Upper lobe of right lung (tissue), 1 donor: ENCODE measurements at regions of chr10 and their contacts with region 1.

Region 1: DNA sequence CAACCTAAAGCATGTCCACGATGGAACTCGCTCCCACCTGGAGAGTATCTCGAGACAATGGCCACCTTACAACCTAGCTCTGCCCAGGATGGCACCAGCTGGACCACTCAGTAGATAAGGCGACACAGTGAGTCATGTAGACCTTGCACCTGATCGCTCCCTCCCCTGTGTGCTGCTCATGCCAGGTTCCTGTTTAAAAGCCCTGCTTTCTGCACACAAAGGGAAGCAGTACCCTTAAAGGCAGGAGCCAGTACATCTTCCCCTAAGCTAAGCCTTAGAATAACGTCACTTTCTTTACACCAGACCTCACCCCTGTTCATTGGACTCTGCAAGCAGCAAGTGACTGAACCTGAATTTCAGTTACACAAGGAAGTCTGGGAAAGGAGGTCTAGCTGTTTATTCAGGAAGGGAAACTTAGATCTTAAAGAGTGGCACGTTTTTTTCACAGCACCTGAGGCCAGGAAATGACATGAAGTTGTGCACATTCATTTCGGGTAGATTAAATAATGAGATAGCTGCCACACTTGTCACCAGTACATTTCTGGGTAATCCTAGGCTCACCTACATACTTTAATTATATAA is 117.9 kb downstream of the MTPAP start:
- DNase-seq: no peak
- ATAC-seq: no peak
- H3K4me3 ChIP-seq: no peak overlapping the region
- H3K27ac ChIP-seq: no peak overlapping the region
- H3K4me1 ChIP-seq: no peaks in the 10 kb centered on the region
- H3K27me3 ChIP-seq: no peaks in the 10 kb centered on the region
- CTCF ChIP-seq: no peak

Region 2: GRCh38 chr10:30002104-30002950 is 228.8 kb before region 1 on chr10:
- intact Hi-C with region 1: loop called (anchors 10 kb)
- DNase-seq: peak; percentile 85
- ATAC-seq: peak; percentile 86
- H3K4me3 ChIP-seq: no peak overlapping the region
- H3K27ac ChIP-seq: peak overlapping the region; percentile 58
- H3K4me1 ChIP-seq: peaks cover 23% of the 10 kb centered on the region
- H3K27me3 ChIP-seq: no peaks in the 10 kb centered on the region
- CTCF ChIP-seq: peak; percentile 81